PC-9 (cell line): ENCODE measurements at regions of chr2 and their contacts with region 1.

Region 1: DNA sequence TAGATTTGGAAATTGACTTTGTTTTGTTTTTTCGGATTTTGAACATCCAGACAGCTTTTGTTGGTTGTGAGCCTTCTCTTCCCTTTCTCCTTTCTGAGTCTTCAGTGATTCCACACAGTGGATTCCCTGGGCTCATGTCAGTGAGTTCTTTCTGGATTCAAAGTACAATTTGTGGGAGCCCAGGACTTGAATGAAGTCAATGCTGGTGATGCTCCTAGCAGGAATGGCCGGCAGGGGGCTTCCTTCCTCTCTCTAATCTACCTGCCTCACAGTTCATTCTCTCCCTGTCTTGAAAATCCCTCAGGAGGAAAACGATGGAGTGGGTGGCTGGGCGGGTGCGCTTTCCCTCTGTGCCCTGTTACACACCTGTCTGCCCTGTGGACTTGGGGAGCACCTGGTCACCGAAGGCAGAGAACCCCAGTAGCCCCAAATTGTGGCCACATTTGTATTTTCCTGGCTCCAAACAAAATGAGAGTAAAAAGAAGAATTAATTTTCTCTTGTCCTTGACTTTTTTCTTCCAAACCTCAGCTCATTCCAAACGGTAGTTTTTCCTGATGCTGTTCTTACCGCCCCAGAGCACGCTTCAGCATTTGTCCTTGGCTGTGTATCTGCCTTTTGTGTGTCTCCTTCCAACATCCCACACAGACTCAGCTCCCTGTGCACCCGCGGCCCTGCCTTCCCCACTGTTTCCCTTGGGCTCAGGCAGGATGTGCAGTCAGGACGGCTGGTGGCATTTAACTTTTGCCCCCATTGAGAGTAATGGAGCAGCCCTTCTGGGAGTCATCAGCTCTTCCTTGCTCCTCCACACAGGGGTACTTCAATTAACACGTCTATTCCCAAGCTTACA is 86.6 kb downstream of the MARCO start:
- DNase-seq: peak in 1 of 2 experiments; percentile 47
- H3K4me3 ChIP-seq: no peak overlapping the region
- H3K27ac ChIP-seq: no peak overlapping the region
- H3K4me1 ChIP-seq: no peaks in the 10 kb centered on the region
- H3K27me3 ChIP-seq: no peaks in the 10 kb centered on the region
- CTCF ChIP-seq: peak; percentile 86

Region 2: GRCh38 chr2:119264781-119265692 is 236.5 kb after region 1 on chr2:
- CTCF ChIA-PET with region 1: no interaction called
- POLR2A ChIA-PET with region 1: no interaction called
- intact Hi-C with region 1: loop called (anchors 1 kb)
- DNase-seq: peak in 1 of 2 experiments; percentile 67
- H3K4me3 ChIP-seq: no peak overlapping the region
- H3K27ac ChIP-seq: no peak overlapping the region
- H3K4me1 ChIP-seq: no peaks in the 10 kb centered on the region
- H3K27me3 ChIP-seq: no peaks in the 10 kb centered on the region
- CTCF ChIP-seq: peak; percentile 95